Right ventricle myocardium inferior (tissue), 1 donor: ENCODE measurements at regions of chr15 and their contacts with region 1.

Region 1: GRCh38 chr15:33021806-33022389 is 172.6 kb downstream of the FMN1 start:
- DNase-seq: no peak
- ATAC-seq: peak; percentile 73

Region 2: DNA sequence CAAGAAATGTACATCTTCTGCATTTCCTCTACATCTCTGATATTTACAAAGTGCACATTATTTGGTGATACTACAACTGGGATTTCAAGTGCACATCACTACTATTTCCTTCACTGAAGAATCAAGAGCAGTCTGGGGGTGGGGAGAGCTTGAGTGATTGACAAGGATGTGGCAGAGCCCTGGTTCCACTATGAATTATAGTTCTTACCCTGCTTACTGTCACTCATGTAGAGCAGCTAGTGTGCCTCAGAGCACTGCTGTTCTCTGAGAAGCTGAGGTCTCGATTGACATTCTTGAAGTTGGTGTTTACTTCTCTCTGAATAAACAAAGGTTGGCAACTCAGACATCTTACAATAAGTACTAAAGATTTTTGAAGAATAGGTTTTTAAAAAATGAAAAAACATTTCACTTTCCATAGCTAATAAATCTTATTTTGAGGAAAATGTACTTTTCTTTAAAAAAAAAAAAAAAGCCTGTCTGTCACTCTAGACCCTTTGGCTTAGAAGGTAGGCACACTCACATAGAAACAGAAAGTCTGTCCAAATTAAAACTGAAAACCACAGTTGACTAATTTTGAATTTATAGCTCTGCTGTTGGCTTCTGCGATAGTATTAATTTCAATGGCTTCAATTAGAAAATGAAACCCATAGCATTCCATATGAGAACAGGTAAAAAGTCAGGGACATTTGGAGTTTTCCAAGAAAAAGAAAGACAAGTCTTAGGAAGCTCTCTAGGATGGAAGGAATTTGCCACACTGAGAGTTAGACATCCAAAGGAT is 298.5 kb before region 1 on chr15:
- intact Hi-C with region 1: no loop called
- DNase-seq: no peak
- ATAC-seq: no peak

Region 3: DNA sequence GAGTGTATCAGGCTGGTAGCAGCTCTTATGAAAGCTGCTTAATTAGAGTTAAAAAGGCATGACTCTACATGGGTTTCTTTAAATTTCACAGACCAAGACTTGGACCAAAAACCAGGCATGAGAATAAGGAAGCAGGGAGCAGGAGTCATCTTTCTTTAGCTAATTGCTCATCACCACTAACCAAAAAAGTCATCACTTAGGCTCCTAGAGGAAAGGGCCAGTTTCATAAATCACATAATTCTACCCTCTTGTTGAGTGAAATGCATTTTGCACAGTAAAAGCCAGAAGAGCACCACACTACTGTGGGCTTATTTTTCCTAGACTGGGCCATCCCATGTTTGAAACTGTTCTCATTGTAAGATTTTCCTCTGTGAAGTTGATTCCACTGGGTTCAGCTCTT is 128.5 kb before region 1 on chr15:
- intact Hi-C with region 1: no loop called
- DNase-seq: no peak
- ATAC-seq: no peak

Region 4: GRCh38 chr15:32994810-32995424 is 27.0 kb before region 1 on chr15:
- intact Hi-C with region 1: no loop called
- DNase-seq: no peak
- ATAC-seq: no peak

Region 5: GRCh38 chr15:33074942-33075341 is 53.0 kb after region 1 on chr15:
- intact Hi-C with region 1: loop called (anchors 1 kb)
- DNase-seq: no peak
- ATAC-seq: peak; percentile 64

Region 6: DNA sequence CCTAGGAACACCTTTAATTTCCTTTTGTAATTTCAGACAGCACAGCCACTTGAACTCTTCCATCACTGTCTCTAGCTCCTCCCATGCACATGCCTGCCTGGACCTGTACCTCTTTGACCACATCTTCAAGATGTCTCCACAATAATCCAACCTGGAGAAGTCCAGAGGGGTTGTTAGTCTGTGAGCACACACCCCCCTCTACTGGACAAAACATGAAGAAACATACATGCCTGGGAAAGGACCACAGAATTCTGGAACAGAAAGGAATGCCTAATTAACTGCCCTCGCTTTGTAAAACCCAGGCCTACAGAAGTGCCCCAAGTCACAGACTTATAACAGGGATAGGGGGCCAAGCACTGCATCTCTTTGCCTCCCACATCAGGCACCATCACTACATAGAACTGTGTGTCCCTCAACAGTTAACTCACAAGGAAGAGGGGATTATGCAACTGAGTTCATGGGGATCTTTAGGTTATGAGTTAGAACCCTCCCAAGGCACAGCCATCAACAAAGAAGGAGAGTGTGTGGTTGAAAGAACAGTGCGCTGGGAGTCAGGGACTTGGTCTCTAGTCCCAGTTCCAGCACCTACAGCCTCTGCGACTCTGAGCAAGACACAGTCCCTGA is 110.9 kb after region 1 on chr15:
- intact Hi-C with region 1: loop called (anchors 2 kb)
- DNase-seq: no peak
- ATAC-seq: peak; percentile 57

Region 7: DNA sequence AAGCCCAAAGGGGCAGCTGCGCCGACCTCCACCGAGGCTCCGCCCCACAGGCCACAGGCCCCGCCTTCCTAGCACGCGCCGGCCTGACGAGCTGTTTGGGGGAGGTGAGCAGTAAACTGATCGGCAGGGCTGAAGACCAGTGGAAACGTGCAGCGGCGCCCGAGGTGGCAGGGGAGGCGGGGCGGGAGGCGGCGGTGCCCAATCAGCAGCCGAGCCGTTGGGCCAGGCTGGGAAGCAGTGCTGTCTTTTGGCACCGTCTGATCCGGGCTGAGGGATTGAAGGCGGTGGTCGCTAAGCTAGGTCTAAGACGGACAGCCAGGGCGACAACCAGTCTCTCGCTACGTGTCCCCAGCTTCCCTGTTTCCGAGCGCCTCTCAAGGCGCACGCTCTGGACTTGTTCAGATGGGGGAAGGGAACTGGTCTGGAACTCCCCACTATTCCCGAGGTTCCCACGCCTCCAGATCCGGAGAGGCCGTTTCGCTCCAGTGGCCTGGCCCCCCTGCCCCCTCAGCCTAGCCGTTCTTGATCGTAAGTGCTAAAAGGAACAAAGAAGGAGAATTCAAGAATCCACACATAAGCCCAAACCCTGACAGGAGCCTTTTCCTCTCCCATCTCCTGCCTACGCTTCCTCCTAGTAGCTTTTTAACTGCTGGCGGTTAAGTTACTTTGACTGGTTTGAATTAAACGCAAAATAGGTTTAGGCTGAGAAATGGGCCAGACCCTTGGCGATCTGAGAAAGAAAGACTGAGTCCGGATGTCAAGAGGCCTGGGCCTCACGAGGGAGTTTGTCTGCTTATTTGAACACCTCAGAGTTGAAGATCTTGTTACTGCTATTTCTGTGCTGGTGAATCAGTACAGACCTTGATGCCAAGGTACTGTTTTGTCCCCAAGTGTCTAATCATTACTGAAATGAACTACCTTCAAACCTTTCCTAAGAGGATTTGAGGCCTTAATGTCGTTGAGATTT is 173.1 kb after region 1 on chr15 and contains the start of gene FMN1:
- intact Hi-C with region 1: loop called (anchors 10 kb)
- DNase-seq: peak; percentile 95
- ATAC-seq: peak; percentile 100
- total RNA-seq, gene FMN1: 3.3 TPM